Activated T-helper 1 cell treated with anti-CD3 and anti-CD28 coated beads, Interleukin-12 subunit alpha, Interleukin-12 subunit beta, Interleukin-2, Interleukin-4 antibody, amounts not matched to agents 30 ng/mL and 10 ng/mL and 1 ng/mL, durations not matched to agents 14 hours and 24 hours and 36 hours (primary cell): ENCODE measurements at regions of chr15 and their contacts with region 1.

Region 1: DNA sequence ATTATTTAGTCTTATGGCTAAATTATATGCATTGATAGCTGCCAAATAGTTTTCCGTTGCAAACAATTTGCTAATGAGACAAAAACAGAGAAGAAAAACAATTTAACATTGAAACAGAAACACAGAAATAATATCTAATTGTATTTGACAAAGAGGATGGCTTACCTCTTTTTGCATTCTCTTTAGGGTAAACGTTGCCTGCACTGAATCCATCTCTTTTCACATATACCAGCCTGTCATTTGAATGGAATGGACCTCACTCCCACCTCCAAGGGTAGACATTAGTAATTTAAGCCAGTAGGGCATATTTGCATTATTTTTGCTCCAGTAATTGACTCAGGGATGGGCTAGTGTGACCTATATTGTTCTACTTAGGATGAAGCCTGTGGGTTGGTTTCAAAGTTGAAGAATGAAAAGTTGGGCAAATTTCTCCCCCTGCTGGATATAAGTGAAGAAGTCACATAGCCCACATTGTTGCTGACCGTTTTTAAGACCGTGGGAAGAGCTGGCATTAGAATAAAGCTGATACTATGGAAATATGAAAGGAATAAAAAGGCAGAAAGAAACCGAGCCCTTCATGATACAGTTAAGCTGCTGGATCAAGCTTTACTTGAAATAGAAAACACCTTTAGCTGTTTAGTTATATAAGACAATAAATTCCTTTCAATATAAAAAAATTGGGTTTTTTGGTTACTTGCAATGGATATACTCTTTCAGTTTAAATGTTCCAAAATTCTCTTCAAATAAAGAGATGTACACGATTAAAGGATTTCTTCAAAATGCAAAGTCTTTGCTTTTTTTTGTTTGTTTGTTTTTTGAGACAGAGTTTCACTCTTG is 26.9 kb downstream of the PIERCE2 start:
- DNase-seq: peak; percentile 1
- H3K4me3 Mint-ChIP-seq: no peak overlapping the region
- H3K27ac Mint-ChIP-seq: no peak overlapping the region
- H3K4me1 Mint-ChIP-seq: peaks cover 11% of the 10 kb centered on the region
- H3K27me3 Mint-ChIP-seq: peaks cover 4% of the 10 kb centered on the region

Region 2: GRCh38 chr15:54082836-54083492 is 1352.2 kb before region 1 on chr15:
- intact Hi-C with region 1: loop called (anchors 10 kb)
- DNase-seq: no peak
- H3K4me3 Mint-ChIP-seq: no peak overlapping the region
- H3K27ac Mint-ChIP-seq: no peak overlapping the region
- H3K4me1 Mint-ChIP-seq: no peaks in the 10 kb centered on the region
- H3K27me3 Mint-ChIP-seq: peaks cover 2% of the 10 kb centered on the region

Region 3: DNA sequence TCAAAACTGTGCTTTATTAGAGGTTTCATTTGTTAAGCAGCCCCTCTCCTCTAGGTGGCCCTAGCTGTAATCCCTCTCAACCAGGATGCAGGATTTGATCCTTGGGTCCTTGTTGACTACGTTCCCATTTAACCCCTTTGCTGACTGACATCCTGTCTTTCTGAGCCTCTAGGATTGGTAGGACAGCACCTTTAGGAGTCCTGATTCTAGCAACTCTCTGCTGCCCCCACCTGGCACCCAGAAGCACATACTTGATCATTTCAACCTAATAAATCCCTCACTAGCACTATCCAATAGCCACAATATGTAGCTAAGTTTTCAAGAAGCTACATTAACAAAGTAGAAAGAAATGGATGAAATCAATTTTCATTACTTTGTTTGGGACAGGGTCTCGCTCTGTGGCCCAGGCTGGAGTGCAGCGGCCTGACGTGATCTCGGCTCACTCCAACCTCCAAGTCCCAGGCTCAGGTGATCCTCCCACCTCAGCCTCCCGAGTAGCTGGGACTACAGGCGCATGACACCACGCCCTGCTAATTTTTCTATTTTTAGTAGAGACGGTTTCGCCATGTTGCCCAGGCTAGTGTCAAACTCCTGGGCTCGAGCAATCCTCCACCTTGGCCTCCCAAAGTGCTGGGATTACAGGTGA is 266.8 kb before region 1 on chr15:
- intact Hi-C with region 1: loop called (anchors 1 kb)
- DNase-seq: peak; percentile 7
- H3K4me3 Mint-ChIP-seq: no peak overlapping the region
- H3K27ac Mint-ChIP-seq: no peak overlapping the region
- H3K4me1 Mint-ChIP-seq: no peaks in the 10 kb centered on the region
- H3K27me3 Mint-ChIP-seq: no peaks in the 10 kb centered on the region

Region 4: DNA sequence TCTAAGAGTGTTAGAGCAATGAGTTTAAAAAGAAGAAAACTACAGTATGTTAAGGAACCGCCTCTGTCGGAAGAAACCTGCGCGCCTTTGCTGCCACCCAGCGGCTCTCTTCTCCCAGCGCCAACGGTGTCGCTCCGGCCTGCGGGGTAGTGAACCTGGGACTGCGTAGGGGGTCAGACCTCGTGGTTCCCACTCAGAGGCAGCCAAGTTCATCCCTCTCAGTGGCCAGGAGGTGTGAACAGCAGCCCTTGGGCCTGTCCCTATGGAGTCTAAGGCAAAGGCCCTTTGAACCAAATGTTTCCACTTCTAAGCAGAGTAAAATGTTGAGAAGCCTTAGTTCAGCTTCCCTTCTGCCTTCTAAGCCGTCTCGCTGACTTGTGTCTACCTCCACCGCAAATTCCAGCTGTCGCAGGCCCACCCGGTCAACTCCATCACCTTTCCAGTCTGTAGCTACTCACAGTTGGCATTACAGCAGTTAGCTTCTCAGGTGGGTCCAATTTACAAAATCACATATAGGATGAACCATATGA is 144.6 kb before region 1 on chr15:
- intact Hi-C with region 1: loop called (anchors 1 kb)
- DNase-seq: peak; percentile 76
- H3K4me3 Mint-ChIP-seq: peak overlapping the region; percentile 86
- H3K27ac Mint-ChIP-seq: peak overlapping the region; percentile 91
- H3K4me1 Mint-ChIP-seq: peaks cover 31% of the 10 kb centered on the region
- H3K27me3 Mint-ChIP-seq: no peaks in the 10 kb centered on the region

Region 5: GRCh38 chr15:55318588-55319494 is 116.4 kb before region 1 on chr15 and contains the starts of genes PIGB and PIGBOS1:
- intact Hi-C with region 1: loop called (anchors 2 kb)
- DNase-seq: peak; percentile 78
- H3K4me3 Mint-ChIP-seq: peak within 1 kb of the TSS; percentile 100
- H3K27ac Mint-ChIP-seq: peak within 1 kb of the TSS; percentile 99
- H3K4me1 Mint-ChIP-seq: peaks cover 63% of the 10 kb centered on the region
- H3K27me3 Mint-ChIP-seq: no peaks in the 10 kb centered on the region
- total RNA-seq, gene PIGB: 14.0 and 19.9 TPM in 2 replicates
- total RNA-seq, gene PIGBOS1: 10.3 and 11.8 TPM in 2 replicates

Region 6: GRCh38 chr15:55407949-55408791 is 27.0 kb before region 1 on chr15 and contains the starts of genes CCPG1 and PIERCE2:
- intact Hi-C with region 1: loop called (anchors 1 kb)
- DNase-seq: peak; percentile 89
- H3K4me3 Mint-ChIP-seq: peak within 1 kb of the TSS; percentile 98
- H3K27ac Mint-ChIP-seq: peak within 1 kb of the TSS; percentile 95
- H3K4me1 Mint-ChIP-seq: peaks cover 26% of the 10 kb centered on the region
- H3K27me3 Mint-ChIP-seq: no peaks in the 10 kb centered on the region
- total RNA-seq, gene CCPG1: 15.0 TPM in 2 replicates
- total RNA-seq, gene PIERCE2: not detected in 2 replicates

Region 7: GRCh38 chr15:55721554-55722185 is 286.5 kb after region 1 on chr15:
- intact Hi-C with region 1: no loop called
- DNase-seq: no peak
- H3K4me3 Mint-ChIP-seq: no peak overlapping the region
- H3K27ac Mint-ChIP-seq: no peak overlapping the region
- H3K4me1 Mint-ChIP-seq: no peaks in the 10 kb centered on the region
- H3K27me3 Mint-ChIP-seq: peaks cover 19% of the 10 kb centered on the region